H1 (cell line): ENCODE measurements at regions of chr17 and their contacts with region 1.

Region 1: GRCh38 chr17:41548844-41549595 is 20.9 kb upstream of the KRT19 start:
- DNase-seq: peak; percentile 80 to 95
- H3K4me3 ChIP-seq: peak overlapping the region in 3 of 4 experiments; percentile 13 to 43 (median 16); a peak in 4 of 8 replicates
- H3K27ac ChIP-seq: peak overlapping the region; percentile 64; the same call in 1 of the 2 replicates
- H3K4me1 ChIP-seq: peaks cover 8 to 24% (median 13%) of the 10 kb centered on the region in 4 experiments
- H3K27me3 ChIP-seq: no peaks in the 10 kb centered on the region; a peak in 2 of 7 replicates
- CTCF ChIP-seq: peak; percentile 87 to 97 (median 96)
- EP300 ChIP-seq: peak in 1 of 2 experiments; percentile 51; a peak in 1 of 3 replicates
- POLR2A ChIP-seq: peak in 1 of 2 experiments; percentile 63; a peak in 1 of 3 replicates
- RAD21 ChIP-seq: peak; percentile 91 to 96

Region 2: DNA sequence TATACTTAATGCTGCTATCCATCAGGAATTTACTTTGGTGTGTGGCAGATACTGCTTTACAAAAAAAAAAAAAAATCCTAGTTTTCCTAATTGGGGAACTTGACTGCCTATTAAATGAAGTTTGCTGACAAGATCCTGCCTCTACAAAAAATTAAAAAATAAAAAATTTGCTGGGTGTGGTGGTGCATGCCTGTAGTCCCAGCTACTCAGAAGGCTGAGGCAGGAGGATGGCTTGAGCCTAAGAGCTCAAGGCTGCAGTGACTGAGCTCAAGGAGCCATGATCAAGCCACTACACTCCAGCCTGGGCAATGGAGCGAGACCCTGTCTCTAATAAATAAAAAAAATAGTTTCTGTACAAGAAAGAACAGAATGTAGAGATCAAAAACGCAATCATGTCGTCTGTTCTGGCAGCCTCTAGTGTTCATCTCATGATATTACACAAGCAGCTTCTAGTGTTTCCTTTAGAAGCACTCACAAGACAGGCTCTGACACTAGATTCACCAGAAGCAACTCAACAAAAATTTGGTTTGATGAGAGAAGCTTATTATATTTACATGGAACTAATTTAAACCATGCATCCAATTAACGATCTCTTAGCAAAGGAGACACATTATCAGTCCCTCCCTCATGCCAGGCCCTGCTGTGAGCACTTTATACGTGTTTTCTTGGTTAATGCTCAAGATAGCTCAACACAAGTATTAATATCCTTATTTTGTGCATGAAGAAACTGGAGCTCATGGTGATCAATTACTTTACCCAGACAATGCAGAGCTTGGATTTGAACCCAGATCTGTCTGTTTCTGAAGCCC is 226.7 kb before region 1 on chr17:
- CTCF ChIA-PET with region 1: interaction called, 13 read pairs
- POLR2A ChIA-PET with region 1: no interaction called
- DNase-seq: no peak
- H3K4me3 ChIP-seq: no peak overlapping the region
- H3K27ac ChIP-seq: no peak overlapping the region
- H3K4me1 ChIP-seq: no peaks in the 10 kb centered on the region; a peak in 1 of 7 replicates
- H3K27me3 ChIP-seq: no peaks in the 10 kb centered on the region
- CTCF ChIP-seq: peak in 2 of 3 experiments; percentile 41 to 68; a peak in 2 of 4 replicates
- EP300 ChIP-seq: no peak
- POLR2A ChIP-seq: no peak
- RAD21 ChIP-seq: peak; percentile 69 to 72

Region 3: DNA sequence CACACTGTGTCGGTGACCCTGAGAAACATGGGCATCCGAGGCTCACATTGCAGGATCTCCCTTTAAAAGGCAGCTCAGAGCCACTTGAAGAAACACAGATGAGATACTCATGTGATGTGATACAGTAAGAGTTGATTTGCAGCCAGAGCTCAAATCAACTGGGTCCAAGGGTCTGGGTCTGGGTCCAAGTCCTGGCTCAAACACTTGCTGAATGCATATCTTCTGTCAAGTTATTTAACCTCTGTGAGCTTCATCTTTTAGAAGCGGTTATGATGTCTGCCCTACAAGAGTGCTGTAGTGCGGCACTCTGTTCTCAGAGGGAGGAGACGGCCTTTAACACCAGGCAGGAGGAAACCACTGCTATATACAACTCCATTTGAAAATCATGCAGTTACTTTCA is 114.6 kb before region 1 on chr17:
- CTCF ChIA-PET with region 1: interaction called, 11 read pairs
- POLR2A ChIA-PET with region 1: no interaction called
- DNase-seq: no peak
- H3K4me3 ChIP-seq: no peak overlapping the region
- H3K27ac ChIP-seq: no peak overlapping the region
- H3K4me1 ChIP-seq: no peaks in the 10 kb centered on the region
- H3K27me3 ChIP-seq: no peaks in the 10 kb centered on the region
- CTCF ChIP-seq: no peak
- EP300 ChIP-seq: no peak
- POLR2A ChIP-seq: no peak
- RAD21 ChIP-seq: no peak

Region 4: GRCh38 chr17:41513168-41513547 is 35.9 kb before region 1 on chr17:
- CTCF ChIA-PET with region 1: interaction called, 427 read pairs
- POLR2A ChIA-PET with region 1: interaction called, 3 read pairs
- DNase-seq: no peak
- H3K4me3 ChIP-seq: no peak overlapping the region
- H3K27ac ChIP-seq: no peak overlapping the region
- H3K4me1 ChIP-seq: peaks cover 0 to 5% (median 3%) of the 10 kb centered on the region in 4 experiments; a peak in 5 of 7 replicates
- H3K27me3 ChIP-seq: no peaks in the 10 kb centered on the region; a peak in 1 of 7 replicates
- CTCF ChIP-seq: no peak
- EP300 ChIP-seq: no peak
- POLR2A ChIP-seq: no peak
- RAD21 ChIP-seq: no peak

Region 5: DNA sequence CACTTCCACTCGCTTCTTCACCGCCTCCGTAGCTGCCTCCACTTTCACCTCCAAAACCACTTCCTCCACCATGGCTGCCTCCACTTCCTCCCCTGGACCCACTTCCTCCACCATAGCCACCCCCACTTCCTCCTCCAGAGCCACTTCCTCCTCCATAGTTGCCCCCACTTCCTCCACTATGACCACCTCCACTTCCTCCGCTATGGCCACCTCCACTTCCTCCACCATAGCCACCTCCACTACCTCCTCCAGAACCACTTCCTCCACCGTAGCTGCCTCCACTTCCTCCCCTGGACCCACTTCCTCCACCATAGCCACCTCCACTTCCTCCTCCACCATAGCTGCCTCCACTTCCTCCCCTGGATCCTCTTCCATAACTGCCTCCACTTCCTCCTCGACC is 18.3 kb after region 1 on chr17:
- CTCF ChIA-PET with region 1: interaction called, 129 read pairs
- POLR2A ChIA-PET with region 1: interaction called, 5 read pairs
- DNase-seq: no peak
- H3K4me3 ChIP-seq: no peak overlapping the region
- H3K27ac ChIP-seq: no peak overlapping the region
- H3K4me1 ChIP-seq: no peaks in the 10 kb centered on the region
- H3K27me3 ChIP-seq: no peaks in the 10 kb centered on the region
- CTCF ChIP-seq: no peak
- EP300 ChIP-seq: no peak
- POLR2A ChIP-seq: no peak
- RAD21 ChIP-seq: no peak

Region 6: GRCh38 chr17:41635121-41636097 is 86.4 kb after region 1 on chr17:
- CTCF ChIA-PET with region 1: interaction called, 492 read pairs
- POLR2A ChIA-PET with region 1: interaction called, 5 read pairs
- DNase-seq: no peak
- H3K4me3 ChIP-seq: no peak overlapping the region
- H3K27ac ChIP-seq: no peak overlapping the region
- H3K4me1 ChIP-seq: peaks cover 0 to 19% (median 4%) of the 10 kb centered on the region in 4 experiments; a peak in 2 of 7 replicates
- H3K27me3 ChIP-seq: peaks cover 0 to 3% (median 0%) of the 10 kb centered on the region in 4 experiments; a peak in 1 of 7 replicates
- CTCF ChIP-seq: no peak
- EP300 ChIP-seq: no peak
- POLR2A ChIP-seq: no peak
- RAD21 ChIP-seq: no peak